ENCODE measurements at regions of chr22 and their contacts with region 1.

Region 1: GRCh38 chr22:40044102-40044869 is 49.5 kb downstream of the FAM83F start:
- DNase-seq: peak; percentile 95 to 100 (median 99)
- ATAC-seq: peak; percentile 86
- H3K4me3 ChIP-seq: peak overlapping the region; percentile 80 to 84
- H3K4me3 Mint-ChIP-seq: peak overlapping the region; percentile 94
- H3K27ac ChIP-seq: peak overlapping the region; percentile 97 to 98
- H3K27ac Mint-ChIP-seq: peak overlapping the region; percentile 100
- H3K4me1 ChIP-seq: peaks cover 28% of the 10 kb centered on the region
- H3K4me1 Mint-ChIP-seq: peaks cover 39% of the 10 kb centered on the region
- H3K27me3 ChIP-seq: no peaks in the 10 kb centered on the region
- H3K27me3 Mint-ChIP-seq: peaks cover 8% of the 10 kb centered on the region
- CTCF ChIP-seq: no peak

Region 2: DNA sequence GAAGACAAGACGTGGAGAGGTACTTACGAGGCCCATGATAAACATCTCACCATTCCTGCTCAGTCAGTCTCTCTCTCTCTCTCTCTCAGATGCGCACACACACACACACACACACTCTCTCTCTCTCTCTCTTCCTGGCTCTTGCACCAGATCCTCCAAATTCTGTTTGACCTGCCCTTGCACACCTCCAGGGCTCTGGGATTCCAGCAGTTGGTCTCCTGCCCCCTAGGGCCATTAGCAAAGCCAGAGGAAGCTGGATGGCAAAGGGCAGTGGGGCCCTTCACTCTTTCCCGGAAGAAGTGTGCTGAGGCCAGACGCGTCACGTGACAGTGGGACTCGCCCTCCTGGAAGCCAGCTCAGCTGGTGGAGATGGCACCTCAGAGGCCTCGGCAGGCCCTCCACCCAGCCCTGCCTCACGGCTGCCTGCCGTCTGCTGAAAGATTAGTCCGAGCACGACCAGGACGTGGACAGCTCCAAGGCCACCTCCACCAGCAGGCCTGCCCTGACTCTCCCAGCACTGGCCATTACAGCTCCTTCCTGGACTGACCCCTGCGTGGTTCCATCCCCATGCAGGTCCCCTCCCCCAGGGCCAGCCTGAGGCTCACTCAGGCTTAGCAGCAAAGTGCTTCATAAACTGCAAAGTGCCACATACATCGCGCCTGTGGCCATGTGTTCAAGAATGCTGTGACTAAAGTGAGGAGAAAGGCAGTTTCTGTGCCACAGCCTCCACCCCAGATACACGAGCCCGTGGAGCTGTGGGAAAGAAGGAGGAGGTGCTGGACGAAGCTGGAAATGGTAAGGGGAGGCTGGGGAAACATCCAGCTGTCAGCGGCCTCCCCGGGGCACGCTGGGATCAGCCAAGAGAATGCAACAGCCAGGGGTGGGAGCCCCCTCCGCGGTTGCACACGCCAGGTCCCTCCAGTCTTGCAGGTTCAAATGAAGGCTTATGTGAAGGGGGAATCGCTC is 803.2 kb before region 1 on chr22:
- CTCF ChIA-PET with region 1: no interaction called
- POLR2A ChIA-PET with region 1: no interaction called
- intact Hi-C with region 1: loop called in 1 of 2 experiments (anchors 5 kb)
- DNase-seq: peak in 6 of 9 experiments; percentile 14 to 76 (median 60)
- ATAC-seq: peak; percentile 9
- H3K4me3 ChIP-seq: peak overlapping the region; percentile 17 to 44
- H3K4me3 Mint-ChIP-seq: peak overlapping the region; percentile 93
- H3K27ac ChIP-seq: peak overlapping the region; percentile 21 to 54
- H3K27ac Mint-ChIP-seq: peak overlapping the region; percentile 95
- H3K4me1 ChIP-seq: peaks cover 60% of the 10 kb centered on the region
- H3K4me1 Mint-ChIP-seq: peaks cover 65% of the 10 kb centered on the region
- H3K27me3 ChIP-seq: peaks cover 3 to 20% of the 10 kb centered on the region in 2 experiments
- H3K27me3 Mint-ChIP-seq: peaks cover 2% of the 10 kb centered on the region
- CTCF ChIP-seq: no peak

Region 3: GRCh38 chr22:39900306-39901227 is 143.7 kb before region 1 on chr22 and contains the start of gene GRAP2:
- CTCF ChIA-PET with region 1: interaction called, 13 read pairs
- POLR2A ChIA-PET with region 1: interaction called, 8 read pairs
- intact Hi-C with region 1: loop called (anchors 5 kb)
- DNase-seq: peak; percentile 49 to 93 (median 74)
- ATAC-seq: peak; percentile 92
- H3K4me3 ChIP-seq: peak within 1 kb of the TSS; percentile 77 to 80
- H3K4me3 Mint-ChIP-seq: peak within 1 kb of the TSS; percentile 97
- H3K27ac ChIP-seq: peak within 1 kb of the TSS; percentile 71 to 80
- H3K27ac Mint-ChIP-seq: peak within 1 kb of the TSS; percentile 91
- H3K4me1 ChIP-seq: peaks cover 42% of the 10 kb centered on the region
- H3K4me1 Mint-ChIP-seq: peaks cover 27% of the 10 kb centered on the region
- H3K27me3 ChIP-seq: no peaks in the 10 kb centered on the region
- H3K27me3 Mint-ChIP-seq: no peaks in the 10 kb centered on the region
- CTCF ChIP-seq: no peak
- total RNA-seq, gene GRAP2: 105 TPM

Region 4: GRCh38 chr22:40084246-40084645 is 40.0 kb after region 1 on chr22:
- CTCF ChIA-PET with region 1: no interaction called
- POLR2A ChIA-PET with region 1: interaction called, 3 read pairs
- intact Hi-C with region 1: loop called in 1 of 2 experiments (anchors 5 kb)
- DNase-seq: no peak
- ATAC-seq: no peak
- H3K4me3 ChIP-seq: no peak overlapping the region
- H3K4me3 Mint-ChIP-seq: no peak overlapping the region
- H3K27ac ChIP-seq: no peak overlapping the region
- H3K27ac Mint-ChIP-seq: no peak overlapping the region
- H3K4me1 ChIP-seq: peaks cover 62% of the 10 kb centered on the region
- H3K4me1 Mint-ChIP-seq: peaks cover 41% of the 10 kb centered on the region
- H3K27me3 ChIP-seq: no peaks in the 10 kb centered on the region
- H3K27me3 Mint-ChIP-seq: no peaks in the 10 kb centered on the region
- CTCF ChIP-seq: no peak

Region 5: DNA sequence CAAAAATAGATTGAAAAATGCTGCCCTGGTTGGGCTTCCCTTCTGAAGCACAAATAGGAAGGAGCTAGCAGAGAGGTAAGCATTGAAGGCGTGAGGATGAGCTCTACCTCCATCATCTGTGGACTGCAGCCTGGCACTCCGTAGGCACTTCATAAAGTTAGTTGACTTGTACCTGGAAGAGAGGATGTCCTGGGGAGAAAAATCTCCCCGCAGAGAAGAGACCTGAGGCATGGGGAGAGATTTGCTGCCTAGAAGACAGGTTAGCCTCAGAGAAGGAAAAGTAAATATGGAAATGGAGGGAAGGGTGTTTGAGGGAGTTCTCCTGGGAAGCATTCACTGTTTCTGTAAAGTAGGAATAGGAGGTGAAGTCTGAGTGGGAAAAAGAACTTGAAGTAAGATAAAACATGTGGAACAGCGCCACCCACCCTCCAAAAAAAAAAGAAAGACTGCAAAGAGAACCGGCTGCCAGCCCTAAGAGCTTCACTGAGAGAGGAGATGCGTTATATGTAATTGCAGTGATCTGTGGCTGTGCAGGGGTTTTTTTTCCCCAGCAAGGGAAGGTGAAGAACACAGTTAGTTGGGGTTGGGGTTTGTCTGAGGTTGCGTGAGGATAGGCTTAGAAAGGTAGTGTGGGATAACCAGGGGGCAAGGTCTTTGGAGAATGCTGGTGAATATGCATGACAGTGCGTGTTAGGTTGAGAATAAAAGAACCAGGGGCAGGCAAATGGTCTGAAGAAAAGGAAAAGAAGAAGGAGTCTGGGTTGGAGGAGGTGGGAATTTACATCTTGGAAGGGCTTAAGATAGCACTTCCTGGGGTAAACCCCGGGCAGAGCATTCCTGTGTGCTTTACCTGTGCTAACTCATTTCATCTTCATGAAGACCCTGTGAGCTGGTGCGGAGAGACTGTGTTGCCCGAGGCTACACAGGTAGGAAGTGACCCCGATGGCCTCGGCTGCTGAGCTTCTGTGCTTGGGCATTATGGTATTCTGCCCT is 149.4 kb after region 1 on chr22:
- CTCF ChIA-PET with region 1: no interaction called
- POLR2A ChIA-PET with region 1: no interaction called
- intact Hi-C with region 1: loop called in 1 of 2 experiments (anchors 5 kb)
- DNase-seq: peak in 1 of 9 experiments; percentile 52
- ATAC-seq: peak; percentile 61
- H3K4me3 ChIP-seq: no peak overlapping the region
- H3K4me3 Mint-ChIP-seq: peak overlapping the region; percentile 32
- H3K27ac ChIP-seq: peak overlapping the region in 1 of 2 experiments; percentile 4
- H3K27ac Mint-ChIP-seq: peak overlapping the region; percentile 82
- H3K4me1 ChIP-seq: peaks cover 50% of the 10 kb centered on the region
- H3K4me1 Mint-ChIP-seq: peaks cover 82% of the 10 kb centered on the region
- H3K27me3 ChIP-seq: no peaks in the 10 kb centered on the region
- H3K27me3 Mint-ChIP-seq: no peaks in the 10 kb centered on the region
- CTCF ChIP-seq: peak; percentile 45

Region 6: GRCh38 chr22:40361100-40361499 is 316.8 kb after region 1 on chr22:
- CTCF ChIA-PET with region 1: no interaction called
- POLR2A ChIA-PET with region 1: no interaction called
- intact Hi-C with region 1: no loop called
- DNase-seq: no peak
- ATAC-seq: no peak
- H3K4me3 ChIP-seq: no peak overlapping the region
- H3K4me3 Mint-ChIP-seq: no peak overlapping the region
- H3K27ac ChIP-seq: no peak overlapping the region
- H3K27ac Mint-ChIP-seq: no peak overlapping the region
- H3K4me1 ChIP-seq: no peaks in the 10 kb centered on the region
- H3K4me1 Mint-ChIP-seq: no peaks in the 10 kb centered on the region
- H3K27me3 ChIP-seq: no peaks in the 10 kb centered on the region
- H3K27me3 Mint-ChIP-seq: no peaks in the 10 kb centered on the region
- CTCF ChIP-seq: no peak

Region 7: GRCh38 chr22:40636380-40637182 is 592.3 kb after region 1 on chr22 and contains the start of gene MRTFA:
- CTCF ChIA-PET with region 1: no interaction called
- POLR2A ChIA-PET with region 1: no interaction called
- intact Hi-C with region 1: loop called in 1 of 2 experiments (anchors 2 kb)
- DNase-seq: peak; percentile 98 to 100 (median 99)
- ATAC-seq: peak; percentile 93
- H3K4me3 ChIP-seq: peak within 1 kb of the TSS; percentile 98 to 100
- H3K4me3 Mint-ChIP-seq: peak within 1 kb of the TSS; percentile 99
- H3K27ac ChIP-seq: peak within 1 kb of the TSS; percentile 89
- H3K27ac Mint-ChIP-seq: peak within 1 kb of the TSS; percentile 98
- H3K4me1 ChIP-seq: peaks cover 34% of the 10 kb centered on the region
- H3K4me1 Mint-ChIP-seq: peaks cover 45% of the 10 kb centered on the region
- H3K27me3 ChIP-seq: no peaks in the 10 kb centered on the region
- H3K27me3 Mint-ChIP-seq: no peaks in the 10 kb centered on the region
- CTCF ChIP-seq: no peak
- total RNA-seq, gene MRTFA: 53.7 to 56.7 TPM

Measured in CD8-positive, alpha-beta T cell (primary cell).